ENCODE measurements at regions of chr2 and their contacts with region 1.

Region 1: GRCh38 chr2:26846328-26847306 is 1.3 kb upstream of the DPYSL5 start:
- DNase-seq: peak; percentile 71 to 97 (median 80)

Region 2: DNA sequence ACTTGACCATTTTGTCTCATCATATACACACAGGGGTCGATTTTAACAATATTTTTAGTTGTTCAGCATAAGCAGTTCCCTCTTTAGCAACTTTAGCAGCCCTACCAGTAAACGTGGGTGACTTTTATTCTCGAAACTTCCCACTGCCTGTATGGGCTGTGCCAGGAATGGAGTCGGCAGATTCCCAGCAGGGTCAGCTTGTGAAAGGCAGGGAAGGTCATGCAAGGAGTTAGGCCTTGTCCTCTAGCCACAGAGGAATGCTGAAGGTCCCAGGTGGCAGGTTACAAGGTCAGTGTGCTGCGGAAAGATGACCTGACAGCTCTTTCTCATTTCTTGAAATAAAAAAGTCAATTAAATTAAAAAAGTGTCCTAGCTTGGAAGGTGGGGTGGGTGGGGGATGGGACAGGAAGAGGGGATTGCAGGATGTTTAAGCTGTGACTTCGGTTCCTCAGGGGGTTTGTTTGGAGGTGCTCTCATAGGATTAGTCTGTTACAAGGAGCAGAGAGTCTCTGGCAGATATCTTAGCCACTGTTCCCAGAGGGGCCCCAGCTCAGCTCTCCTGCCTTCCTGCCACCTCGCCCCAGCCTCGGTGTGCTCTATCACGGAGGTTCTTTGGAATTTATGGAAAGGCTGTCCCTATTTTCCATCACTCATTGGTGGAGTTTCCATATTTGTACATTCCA is 423.5 kb before region 1 on chr2:
- intact Hi-C with region 1: no loop called
- DNase-seq: no peak

Region 3: GRCh38 chr2:26696351-26696816 is 150.2 kb before region 1 on chr2:
- intact Hi-C with region 1: no loop called
- DNase-seq: peak in 2 of 10 donors; percentile 44 to 73

Region 4: GRCh38 chr2:26922405-26923188 is 76.0 kb after region 1 on chr2:
- intact Hi-C with region 1: loop called (anchors 2 kb)
- DNase-seq: peak; percentile 71 to 97 (median 84)

Region 5: GRCh38 chr2:26942543-26943295 is 96.1 kb after region 1 on chr2:
- intact Hi-C with region 1: loop called (anchors 1 kb)
- DNase-seq: peak; percentile 64 to 97 (median 80)

Region 6: GRCh38 chr2:27016801-27017325 is 170.2 kb after region 1 on chr2:
- intact Hi-C with region 1: loop called (anchors 10 kb)
- DNase-seq: peak in 6 of 10 donors; percentile 43 to 84 (median 53)

Region 7: GRCh38 chr2:27123302-27124231 is 276.9 kb after region 1 on chr2 and contains the start of gene ABHD1:
- intact Hi-C with region 1: no loop called
- DNase-seq: peak; percentile 53 to 97 (median 78)

Measured in posterior cingulate gyrus (tissue), 11 donors.